Calu3 (cell line): ENCODE measurements at regions of chr5 and their contacts with region 1.

Region 1: DNA sequence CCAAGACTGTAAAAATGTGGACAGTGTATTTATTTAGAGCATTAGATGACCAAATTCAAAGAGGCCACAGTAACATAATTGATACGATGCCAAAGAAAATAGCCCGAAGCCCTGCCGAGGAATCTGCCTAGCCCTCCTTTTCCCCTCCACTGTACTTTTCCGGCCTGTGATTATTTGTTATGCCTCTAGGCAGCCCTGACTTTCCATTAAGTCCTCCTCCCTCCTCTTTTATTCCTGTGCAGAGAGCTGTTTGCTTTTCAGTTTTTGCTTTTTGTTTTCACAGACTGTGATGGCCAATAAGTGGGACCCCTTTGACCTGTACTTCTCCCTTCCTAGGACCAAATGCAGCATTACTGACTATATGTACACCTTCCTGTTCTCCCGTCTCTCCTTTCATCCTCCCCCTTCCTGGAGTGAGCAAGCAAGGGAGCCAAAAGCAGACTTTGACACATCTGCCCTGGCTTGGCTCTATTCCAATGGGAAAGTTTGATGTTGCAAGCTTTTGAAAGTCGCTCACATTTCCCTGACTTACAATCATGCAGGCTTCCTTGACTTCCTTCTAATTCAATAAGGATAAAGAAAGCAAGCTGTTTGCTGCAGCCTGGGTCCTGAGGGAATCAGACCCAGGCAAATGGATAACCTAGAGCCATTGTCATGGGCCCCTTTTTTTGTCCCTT is 76.1 kb downstream of the NREP start:
- DNase-seq: peak; percentile 82
- H3K4me3 Mint-ChIP-seq: peak overlapping the region; percentile 22
- H3K27ac Mint-ChIP-seq: peak overlapping the region; percentile 91
- H3K4me1 Mint-ChIP-seq: peaks cover 21% of the 10 kb centered on the region
- H3K27me3 Mint-ChIP-seq: no peaks in the 10 kb centered on the region
- CTCF ChIP-seq: no peak

Region 2: DNA sequence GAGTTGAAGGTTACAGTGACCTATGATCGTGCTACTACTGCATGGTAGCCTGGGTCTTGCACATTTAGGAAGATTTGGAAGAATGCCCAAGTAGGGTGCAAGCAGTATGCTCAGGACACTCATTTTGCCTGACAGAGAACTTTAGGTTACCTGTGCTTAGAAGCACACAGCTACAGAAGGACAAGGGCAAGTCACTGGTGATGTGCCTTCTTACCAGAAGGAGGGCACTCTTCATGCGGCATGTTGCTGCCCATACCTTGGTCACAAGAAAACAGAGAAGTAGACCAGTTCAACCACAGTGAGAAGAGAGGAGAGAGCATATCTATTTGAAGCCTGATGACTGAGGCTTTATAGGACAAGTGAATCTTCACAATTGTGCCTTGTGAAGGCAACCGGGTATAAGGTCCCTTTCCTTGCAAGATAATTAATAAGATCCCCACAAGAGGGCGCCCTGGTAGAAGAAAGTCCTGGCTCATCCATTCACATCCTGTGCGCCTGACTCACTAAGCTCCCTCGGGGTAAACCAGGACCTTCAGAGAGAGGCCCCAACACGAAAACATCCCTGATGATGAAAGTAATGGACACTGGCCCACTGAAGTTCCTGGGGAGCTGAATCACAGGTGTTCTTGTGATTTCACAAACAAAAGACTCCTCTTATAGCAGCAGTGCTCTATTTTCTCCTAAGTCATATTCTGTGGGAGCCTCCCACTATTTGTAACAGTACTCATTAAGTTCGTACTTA is 130.4 kb before region 1 on chr5:
- CTCF ChIA-PET with region 1: interaction called, 9 read pairs
- intact Hi-C with region 1: loop called (anchors 5 kb)
- DNase-seq: peak; percentile 88
- H3K4me3 Mint-ChIP-seq: no peak overlapping the region
- H3K27ac Mint-ChIP-seq: no peak overlapping the region
- H3K4me1 Mint-ChIP-seq: peaks cover 9% of the 10 kb centered on the region
- H3K27me3 Mint-ChIP-seq: no peaks in the 10 kb centered on the region
- CTCF ChIP-seq: peak; percentile 45

Region 3: GRCh38 chr5:111774525-111774924 is 93.7 kb after region 1 on chr5:
- CTCF ChIA-PET with region 1: no interaction called
- intact Hi-C with region 1: loop called (anchors 10 kb)
- DNase-seq: peak; percentile 83
- H3K4me3 Mint-ChIP-seq: no peak overlapping the region
- H3K27ac Mint-ChIP-seq: peak overlapping the region; percentile 12
- H3K4me1 Mint-ChIP-seq: peaks cover 41% of the 10 kb centered on the region
- H3K27me3 Mint-ChIP-seq: no peaks in the 10 kb centered on the region
- CTCF ChIP-seq: no peak

Region 4: GRCh38 chr5:111830333-111830732 is 149.5 kb after region 1 on chr5:
- CTCF ChIA-PET with region 1: no interaction called
- intact Hi-C with region 1: loop called (anchors 10 kb)
- DNase-seq: peak; percentile 61
- H3K4me3 Mint-ChIP-seq: no peak overlapping the region
- H3K27ac Mint-ChIP-seq: peak overlapping the region; percentile 64
- H3K4me1 Mint-ChIP-seq: peaks cover 21% of the 10 kb centered on the region
- H3K27me3 Mint-ChIP-seq: no peaks in the 10 kb centered on the region
- CTCF ChIP-seq: no peak